ENCODE measurements at regions of chr6 and their contacts with region 1.

Region 1: GRCh38 chr6:32153564-32154513 is at the start of gene PPT2:
- DNase-seq: peak; percentile 52 to 95 (median 80)
- ATAC-seq: peak; percentile 74
- H3K4me3 ChIP-seq: peak within 1 kb of the TSS; percentile 84 to 88
- H3K4me3 Mint-ChIP-seq: peak within 1 kb of the TSS; percentile 97
- H3K27ac ChIP-seq: peak within 1 kb of the TSS; percentile 67 to 76
- H3K27ac Mint-ChIP-seq: peak within 1 kb of the TSS; percentile 85
- H3K4me1 ChIP-seq: peaks cover 40% of the 10 kb centered on the region
- H3K4me1 Mint-ChIP-seq: peaks cover 59% of the 10 kb centered on the region
- H3K27me3 ChIP-seq: peaks cover 0 to 5% of the 10 kb centered on the region in 2 experiments
- H3K27me3 Mint-ChIP-seq: peaks cover 8% of the 10 kb centered on the region
- CTCF ChIP-seq: no peak
- total RNA-seq, gene PPT2: 11.1 to 25.5 TPM

Region 2: DNA sequence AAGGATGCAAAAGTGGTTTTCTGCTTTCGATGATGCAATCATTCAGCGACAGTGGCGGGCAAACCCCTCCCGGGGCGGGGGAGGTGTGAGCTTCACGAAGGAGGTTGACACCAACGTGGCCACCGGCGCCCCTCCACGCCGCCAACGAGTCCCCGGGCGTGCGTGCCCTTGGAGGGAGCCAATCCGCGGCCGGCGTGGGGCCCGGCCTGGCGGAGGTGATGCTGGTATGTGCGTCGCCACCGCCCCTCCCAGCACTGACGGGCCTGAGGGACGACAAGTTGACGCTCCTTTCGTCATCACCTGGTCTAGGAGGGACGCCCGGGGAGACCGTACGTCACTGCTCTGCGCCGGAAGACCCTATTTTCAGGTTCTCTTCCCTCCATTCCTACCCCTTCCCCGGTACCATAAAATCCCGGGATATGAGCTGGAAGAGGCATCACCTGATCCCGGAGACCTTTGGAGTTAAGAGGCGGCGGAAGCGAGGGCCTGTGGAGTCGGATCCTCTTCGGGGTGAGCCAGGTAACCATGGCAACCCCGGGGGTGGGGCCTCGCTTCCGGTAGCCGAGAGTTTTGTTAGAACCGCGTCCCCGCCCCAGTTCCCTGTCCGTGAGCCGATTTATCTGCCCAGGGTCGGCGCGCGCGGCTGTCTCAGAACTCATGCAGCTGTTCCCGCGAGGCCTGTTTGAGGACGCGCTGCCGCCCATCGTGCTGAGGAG is 181.7 kb before region 1 on chr6 and contains the start of gene DXO:
- CTCF ChIA-PET with region 1: no interaction called
- POLR2A ChIA-PET with region 1: no interaction called
- intact Hi-C with region 1: loop called (anchors 10 kb)
- DNase-seq: peak; percentile 91 to 100 (median 97)
- ATAC-seq: peak; percentile 93
- H3K4me3 ChIP-seq: peak within 1 kb of the TSS; percentile 66 to 90
- H3K4me3 Mint-ChIP-seq: peak within 1 kb of the TSS; percentile 96
- H3K27ac ChIP-seq: peak within 1 kb of the TSS; percentile 98 to 99
- H3K27ac Mint-ChIP-seq: peak within 1 kb of the TSS; percentile 100
- H3K4me1 ChIP-seq: peaks cover 22% of the 10 kb centered on the region
- H3K4me1 Mint-ChIP-seq: peaks cover 37% of the 10 kb centered on the region
- H3K27me3 ChIP-seq: no peaks in the 10 kb centered on the region
- H3K27me3 Mint-ChIP-seq: no peaks in the 10 kb centered on the region
- CTCF ChIP-seq: no peak
- total RNA-seq, gene DXO: 20.8 to 22.2 TPM

Region 3: DNA sequence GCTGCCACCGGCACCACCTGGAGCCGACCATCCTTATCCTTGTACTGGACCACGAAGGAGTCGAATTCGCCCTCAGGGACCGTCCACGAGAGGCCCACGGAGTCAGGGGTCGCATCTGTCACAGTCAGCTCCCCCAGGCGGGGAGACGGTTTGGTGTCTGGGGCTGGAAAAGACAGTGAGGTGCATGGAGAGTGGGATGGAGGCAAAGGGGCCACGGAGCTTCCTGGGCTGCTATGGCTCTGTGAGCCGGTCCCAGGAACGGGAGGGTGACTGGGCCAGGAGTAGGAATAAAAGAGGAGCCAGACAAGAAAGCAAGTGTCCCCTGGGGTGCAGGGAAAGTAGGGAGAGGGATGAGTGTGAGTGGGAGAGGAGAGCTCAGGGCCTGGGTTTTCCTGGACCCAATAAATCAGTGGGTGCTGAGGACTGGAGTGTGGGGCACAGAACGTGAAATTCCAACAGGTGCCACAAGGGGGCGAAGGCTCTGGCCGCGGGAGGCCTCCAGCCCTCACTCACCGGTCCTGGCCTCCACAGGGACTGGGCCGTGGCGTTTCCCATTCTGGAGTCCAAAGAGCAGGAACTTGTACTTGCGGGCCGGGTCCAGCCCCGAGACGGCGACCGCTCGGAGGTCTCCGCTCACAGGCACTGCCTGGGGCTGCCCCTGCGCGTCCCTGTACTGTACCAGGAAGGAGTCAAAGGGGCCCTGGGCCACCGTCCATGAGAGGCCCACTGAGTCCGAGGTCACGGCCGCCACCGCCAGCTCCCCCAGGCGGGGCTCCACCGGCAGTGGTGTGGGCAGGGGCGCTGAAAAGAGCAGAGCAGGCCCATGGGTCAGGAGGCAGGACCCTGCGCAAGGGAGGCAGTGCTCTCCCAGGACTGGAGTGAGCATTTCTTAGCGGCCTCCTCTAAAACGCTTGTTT is 105.7 kb before region 1 on chr6:
- CTCF ChIA-PET with region 1: no interaction called
- POLR2A ChIA-PET with region 1: no interaction called
- intact Hi-C with region 1: loop called in 1 of 2 experiments (anchors 10 kb)
- DNase-seq: peak; percentile 39 to 81 (median 71)
- ATAC-seq: peak; percentile 78
- H3K4me3 ChIP-seq: no peak overlapping the region
- H3K4me3 Mint-ChIP-seq: peak overlapping the region; percentile 26
- H3K27ac ChIP-seq: no peak overlapping the region
- H3K27ac Mint-ChIP-seq: no peak overlapping the region
- H3K4me1 ChIP-seq: no peaks in the 10 kb centered on the region
- H3K4me1 Mint-ChIP-seq: peaks cover 4% of the 10 kb centered on the region
- H3K27me3 ChIP-seq: no peaks in the 10 kb centered on the region
- H3K27me3 Mint-ChIP-seq: no peaks in the 10 kb centered on the region
- CTCF ChIP-seq: peak; percentile 93

Region 4: DNA sequence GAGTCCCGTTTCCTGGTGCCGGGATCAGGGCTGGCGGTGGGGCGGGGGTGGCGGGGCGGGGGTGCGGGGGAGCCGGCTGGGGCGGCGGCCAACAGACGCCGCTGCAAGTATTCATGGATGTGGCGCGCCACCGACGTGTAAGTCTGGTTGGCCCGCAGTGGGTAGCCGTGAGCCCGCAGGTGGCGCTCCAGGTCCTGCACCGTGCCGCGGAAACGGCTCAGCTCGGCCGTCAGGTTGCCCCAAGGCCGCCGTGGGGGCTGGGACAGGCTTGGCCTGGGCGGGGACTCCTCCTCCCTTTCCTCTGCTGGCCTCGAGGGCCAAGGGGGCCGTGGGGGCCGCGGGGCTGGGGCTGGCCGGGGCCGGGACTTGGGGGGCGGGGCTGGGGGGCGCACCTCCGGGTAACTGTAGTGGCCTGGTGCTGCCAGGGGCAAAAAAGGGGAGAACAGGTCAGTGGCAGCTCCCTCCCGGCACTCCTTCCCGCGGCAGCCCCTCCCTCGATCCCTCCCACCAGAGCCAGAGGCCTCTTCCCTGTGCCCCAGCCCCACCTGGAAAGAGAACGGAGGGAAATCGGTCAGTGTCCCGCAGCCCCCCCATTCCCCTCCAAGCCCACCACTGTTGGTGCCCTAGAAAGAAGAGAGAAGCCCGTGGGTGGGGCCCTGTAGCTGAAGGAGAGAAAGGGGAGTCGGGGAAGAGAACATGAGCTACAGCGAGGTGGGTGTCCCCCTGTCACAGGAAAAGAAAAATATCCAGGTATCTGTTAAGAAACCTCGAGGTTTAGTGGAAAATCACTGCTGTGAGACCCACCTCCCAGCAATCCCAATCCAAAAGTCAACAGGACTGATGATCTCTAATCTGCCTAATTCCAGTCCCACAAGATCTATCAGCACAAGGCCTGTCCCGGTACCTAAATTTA is 66.0 kb before region 1 on chr6:
- CTCF ChIA-PET with region 1: interaction called, 4 read pairs
- POLR2A ChIA-PET with region 1: no interaction called
- intact Hi-C with region 1: loop called (anchors 1 kb)
- DNase-seq: peak; percentile 43 to 82 (median 72)
- ATAC-seq: peak; percentile 94
- H3K4me3 ChIP-seq: no peak overlapping the region
- H3K4me3 Mint-ChIP-seq: no peak overlapping the region
- H3K27ac ChIP-seq: no peak overlapping the region
- H3K27ac Mint-ChIP-seq: no peak overlapping the region
- H3K4me1 ChIP-seq: no peaks in the 10 kb centered on the region
- H3K4me1 Mint-ChIP-seq: no peaks in the 10 kb centered on the region
- H3K27me3 ChIP-seq: peaks cover 4 to 10% of the 10 kb centered on the region in 2 experiments
- H3K27me3 Mint-ChIP-seq: peaks cover 24% of the 10 kb centered on the region
- CTCF ChIP-seq: peak; percentile 34

Region 5: DNA sequence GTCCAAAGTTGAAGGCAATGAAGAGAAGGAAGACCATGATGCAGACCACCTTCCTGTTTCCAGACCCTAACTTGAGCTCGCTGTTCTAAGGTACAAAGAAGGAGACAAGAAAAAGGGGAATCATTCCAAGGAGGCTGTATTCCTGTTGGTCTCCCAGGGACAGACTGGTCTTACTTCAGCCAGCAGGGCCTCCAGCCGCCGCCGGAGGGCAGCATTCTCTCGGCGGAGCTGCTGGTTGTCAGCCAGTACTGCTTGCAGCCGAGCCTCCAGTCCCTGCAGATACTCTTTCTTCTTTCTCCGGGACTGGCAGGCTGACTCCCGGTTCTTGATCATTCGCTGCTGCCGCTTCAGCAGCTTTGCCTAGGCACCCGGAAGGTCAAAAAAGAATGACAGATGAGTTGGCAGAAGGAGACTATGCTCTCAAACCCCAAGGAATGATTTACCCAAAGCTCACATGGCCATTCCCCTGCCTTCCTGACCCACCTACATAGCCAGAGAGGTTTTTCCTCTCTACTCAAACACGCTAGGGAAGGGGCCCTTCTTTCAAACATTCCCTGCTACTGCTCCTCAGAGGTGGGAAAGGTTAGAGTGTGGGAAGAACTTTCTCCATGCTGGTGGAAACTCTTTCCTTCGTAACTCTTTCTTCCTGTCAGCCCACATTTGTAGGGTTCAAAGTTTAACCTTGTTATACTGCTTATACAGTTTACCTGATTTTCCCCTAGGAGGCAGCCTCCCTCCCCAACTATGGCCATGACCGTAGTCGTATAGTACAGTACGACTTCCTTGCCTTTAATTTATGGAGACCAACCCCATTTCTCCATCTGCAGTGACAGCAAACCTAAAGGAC is 34.8 kb before region 1 on chr6:
- CTCF ChIA-PET with region 1: interaction called, 9 read pairs
- POLR2A ChIA-PET with region 1: interaction called, 8 read pairs
- intact Hi-C with region 1: loop called (anchors 1 kb)
- DNase-seq: peak; percentile 46 to 80 (median 70)
- ATAC-seq: peak; percentile 86
- H3K4me3 ChIP-seq: no peak overlapping the region
- H3K4me3 Mint-ChIP-seq: no peak overlapping the region
- H3K27ac ChIP-seq: no peak overlapping the region
- H3K27ac Mint-ChIP-seq: peak overlapping the region; percentile 62
- H3K4me1 ChIP-seq: no peaks in the 10 kb centered on the region
- H3K4me1 Mint-ChIP-seq: peaks cover 8% of the 10 kb centered on the region
- H3K27me3 ChIP-seq: no peaks in the 10 kb centered on the region
- H3K27me3 Mint-ChIP-seq: no peaks in the 10 kb centered on the region
- CTCF ChIP-seq: peak; percentile 79

Measured in CD8-positive, alpha-beta T cell (primary cell).